ENCODE measurements at regions of chr11 and their contacts with region 1.

Region 1: GRCh38 chr11:94593030-94593429 is 25.9 kb downstream of the PIWIL4 start:
- DNase-seq: no peak
- ATAC-seq: peak in 1 of 4 donors; percentile 30
- H3K4me3 ChIP-seq: no peak overlapping the region
- H3K27ac ChIP-seq: no peak overlapping the region
- H3K4me1 ChIP-seq: no peaks in the 10 kb centered on the region
- H3K27me3 ChIP-seq: no peaks in the 10 kb centered on the region
- CTCF ChIP-seq: no peak
- POLR2A ChIP-seq: no peak

Region 2: DNA sequence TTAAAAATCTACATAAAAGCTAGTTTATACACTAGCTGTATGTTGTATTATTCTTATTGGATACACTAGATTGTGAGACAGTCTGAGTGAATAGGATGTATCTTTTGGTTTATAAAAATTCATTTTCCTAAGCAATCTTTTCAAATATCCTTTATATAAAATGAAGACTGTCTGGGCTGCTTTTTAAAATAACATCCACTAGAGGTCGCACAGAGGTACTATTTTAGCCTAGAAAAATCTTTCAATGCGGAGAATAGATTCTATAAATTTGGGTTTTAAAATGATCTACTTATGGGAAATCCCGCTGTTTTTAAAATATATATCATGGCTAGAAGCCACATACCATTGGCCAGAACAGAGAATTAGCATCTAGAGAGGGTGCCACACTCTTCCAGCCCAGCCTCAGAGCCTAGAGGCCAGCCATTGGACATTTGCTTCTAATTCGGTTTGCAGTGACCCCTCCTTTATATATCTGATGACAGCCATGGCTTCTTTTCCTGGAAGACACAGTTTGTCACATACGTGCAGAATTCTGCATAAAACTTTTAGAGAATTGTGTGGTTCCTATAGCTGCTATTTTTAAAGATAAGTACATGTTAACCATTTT is 73.4 kb before region 1 on chr11:
- intact Hi-C with region 1: loop called in 1 of 2 experiments (anchors 10 kb)
- DNase-seq: no peak
- ATAC-seq: peak; percentile 58 to 83 (median 67)
- H3K4me3 ChIP-seq: no peak overlapping the region
- H3K27ac ChIP-seq: no peak overlapping the region
- H3K4me1 ChIP-seq: no peaks in the 10 kb centered on the region
- H3K27me3 ChIP-seq: no peaks in the 10 kb centered on the region
- CTCF ChIP-seq: peak; percentile 62 to 72 (median 65)
- POLR2A ChIP-seq: no peak